Heart right ventricle (tissue), 16 donors: ENCODE measurements at regions of chr17 and their contacts with region 1.

Region 1: GRCh38 chr17:21457051-21458026 is 81.2 kb downstream of the KCNJ12 start:
- DNase-seq: peak; percentile 86 to 94
- ATAC-seq: peak; percentile 90 to 94 (median 92)
- H3K4me3 ChIP-seq: no peak overlapping the region
- H3K27ac ChIP-seq: no peak overlapping the region
- H3K4me1 ChIP-seq: peaks cover 0 to 11% (median 5%) of the 10 kb centered on the region in 9 donors
- H3K27me3 ChIP-seq: peaks cover 0 to 6% (median 0%) of the 10 kb centered on the region in 7 donors
- CTCF ChIP-seq: peak; percentile 89 to 99 (median 97)

Region 2: DNA sequence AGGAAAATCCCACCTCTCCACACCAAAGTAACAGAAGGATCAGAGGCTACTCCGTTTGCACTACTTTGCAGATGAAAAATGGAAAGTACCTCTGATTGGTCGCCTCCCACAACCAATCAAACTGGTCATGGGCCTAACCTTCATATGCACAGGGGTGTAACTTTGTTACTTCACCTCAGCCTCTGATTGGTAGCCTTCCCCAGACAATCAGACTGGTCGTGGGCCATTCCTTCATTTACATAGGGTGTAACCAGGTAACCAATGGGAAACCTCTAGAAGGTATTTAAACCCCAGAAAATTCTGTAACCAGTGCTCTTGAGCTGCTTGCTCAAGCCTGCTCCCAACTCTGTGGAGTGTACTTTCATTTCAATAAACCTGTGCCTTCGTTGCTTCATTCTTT is 375.4 kb before region 1 on chr17:
- intact Hi-C with region 1: no loop called
- DNase-seq: no peak
- ATAC-seq: no peak
- H3K4me3 ChIP-seq: no peak overlapping the region
- H3K27ac ChIP-seq: no peak overlapping the region
- H3K4me1 ChIP-seq: peaks cover 0 to 7% (median 0%) of the 10 kb centered on the region in 9 donors
- H3K27me3 ChIP-seq: peaks cover 0 to 4% (median 0%) of the 10 kb centered on the region in 7 donors
- CTCF ChIP-seq: no peak

Region 3: GRCh38 chr17:21100636-21101035 is 356.7 kb before region 1 on chr17:
- intact Hi-C with region 1: no loop called
- DNase-seq: no peak
- ATAC-seq: no peak
- H3K4me3 ChIP-seq: no peak overlapping the region
- H3K27ac ChIP-seq: no peak overlapping the region
- H3K4me1 ChIP-seq: peaks cover 0 to 14% (median 13%) of the 10 kb centered on the region in 9 donors
- H3K27me3 ChIP-seq: no peaks in the 10 kb centered on the region
- CTCF ChIP-seq: no peak

Region 4: GRCh38 chr17:21119247-21119918 is 338.0 kb before region 1 on chr17:
- intact Hi-C with region 1: loop called in 5 of 10 experiments (anchors 5 to 10 kb)
- DNase-seq: peak; percentile 45 to 76
- ATAC-seq: peak; percentile 67 to 93 (median 78)
- H3K4me3 ChIP-seq: peak overlapping the region in 3 of 10 donors; percentile 8 to 23 (median 17)
- H3K27ac ChIP-seq: peak overlapping the region in 5 of 10 donors; percentile 10 to 55 (median 21)
- H3K4me1 ChIP-seq: peaks cover 0 to 22% (median 7%) of the 10 kb centered on the region in 9 donors
- H3K27me3 ChIP-seq: peaks cover 0 to 4% (median 0%) of the 10 kb centered on the region in 7 donors
- CTCF ChIP-seq: peak; percentile 63 to 87 (median 83)

Region 5: DNA sequence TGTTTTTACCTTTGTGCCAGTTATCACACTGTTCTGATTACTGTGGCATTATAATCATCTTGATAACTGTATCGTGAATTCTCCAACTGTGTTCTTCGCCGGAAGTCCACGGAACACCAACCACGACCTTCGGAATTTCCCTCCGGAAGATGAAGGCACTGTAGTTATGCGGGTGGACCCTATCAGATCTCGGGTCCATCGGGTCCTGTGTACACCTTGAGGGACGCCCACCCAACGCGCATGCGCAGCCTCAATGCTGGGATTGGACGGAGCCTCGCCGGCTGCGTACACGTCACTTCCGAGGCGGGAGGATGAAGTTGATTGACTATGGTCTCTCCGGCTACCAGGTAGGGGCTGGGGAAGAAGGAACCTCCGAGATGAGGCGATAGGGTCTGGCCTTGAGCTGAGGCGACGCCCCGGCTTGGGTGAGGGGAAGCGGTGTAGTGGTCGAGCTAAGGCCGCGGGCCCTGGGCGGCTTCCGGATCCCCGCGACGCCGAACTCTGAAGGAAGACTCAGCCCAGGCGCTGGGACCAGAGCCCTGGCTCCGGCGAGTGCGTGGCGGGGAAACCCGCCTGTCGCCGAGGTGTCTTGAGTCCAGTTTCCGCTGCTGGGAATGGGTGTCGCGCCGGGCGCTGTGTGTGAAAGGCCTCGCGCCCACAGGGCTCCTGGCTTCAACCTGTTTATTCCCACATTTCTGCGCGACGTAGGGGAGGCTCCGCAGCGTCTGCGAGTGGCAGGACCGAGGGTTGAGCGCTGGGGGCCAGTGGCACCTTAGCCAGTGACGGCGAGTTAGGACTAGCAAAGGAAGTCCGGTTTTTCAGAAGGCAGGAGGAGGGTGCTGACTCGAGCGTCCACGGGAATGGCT is 330.5 kb before region 1 on chr17 and contains the start of gene DHRS7B:
- intact Hi-C with region 1: loop called in 4 of 10 experiments (anchors 5 to 10 kb)
- DNase-seq: peak; percentile 96 to 97
- ATAC-seq: peak; percentile 96 to 98 (median 98)
- H3K4me3 ChIP-seq: peak within 1 kb of the TSS; percentile 61 to 96 (median 91)
- H3K27ac ChIP-seq: peak within 1 kb of the TSS; percentile 82 to 96 (median 94)
- H3K4me1 ChIP-seq: peaks cover 4 to 63% (median 39%) of the 10 kb centered on the region in 9 donors
- H3K27me3 ChIP-seq: no peaks in the 10 kb centered on the region
- CTCF ChIP-seq: peak in 1 of 9 donors; percentile 13
- total RNA-seq, gene DHRS7B: 17.1 to 48.0 (median 26.0) TPM

Region 6: DNA sequence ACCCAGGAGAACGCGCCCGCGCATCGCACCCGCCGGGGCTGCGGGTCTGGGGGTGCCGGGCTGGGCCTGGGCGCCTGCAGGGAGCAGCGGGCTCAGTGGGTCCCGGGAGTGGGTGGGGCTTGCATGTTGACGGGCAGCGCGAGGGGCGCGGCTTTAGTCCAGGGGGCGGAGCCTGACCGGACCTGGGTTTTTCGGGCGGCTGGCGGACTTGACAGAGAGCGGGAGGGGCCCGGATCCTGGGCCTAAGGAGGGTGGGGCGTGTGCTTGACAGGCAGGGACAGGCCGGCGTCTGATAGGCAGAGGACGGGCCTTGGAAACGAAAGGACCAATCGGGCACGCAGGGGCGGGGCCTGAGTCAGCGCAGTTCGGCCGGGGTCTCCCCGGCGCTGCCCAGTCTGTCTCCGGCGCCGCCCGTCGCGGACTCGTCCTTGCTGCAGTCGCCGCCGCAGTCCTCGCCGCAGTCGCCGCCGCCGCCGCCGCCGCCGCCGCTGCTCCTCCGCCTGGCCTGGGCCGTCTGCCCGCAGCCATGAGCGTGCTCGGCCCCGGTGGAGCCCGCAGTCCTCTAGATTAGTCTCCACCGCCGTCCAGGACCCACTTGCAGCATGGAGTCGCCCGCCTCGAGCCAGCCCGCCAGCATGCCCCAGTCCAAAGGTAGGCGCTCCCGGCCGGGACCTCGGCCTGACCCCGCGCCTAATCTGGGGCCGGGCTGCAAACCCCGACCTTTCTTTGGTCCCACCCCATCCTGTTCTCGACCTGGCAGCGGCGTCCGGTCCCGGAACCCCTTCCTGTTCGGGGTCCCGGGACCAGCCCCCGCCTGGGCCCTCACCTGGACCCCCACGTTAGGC is 172.8 kb before region 1 on chr17 and contains the start of gene MAP2K3:
- intact Hi-C with region 1: loop called in 7 of 10 experiments (anchors 5 to 10 kb)
- DNase-seq: peak; percentile 99
- ATAC-seq: peak; percentile 79 to 91 (median 86)
- H3K4me3 ChIP-seq: peak within 1 kb of the TSS; percentile 67 to 99 (median 97)
- H3K27ac ChIP-seq: peak within 1 kb of the TSS; percentile 83 to 99 (median 96)
- H3K4me1 ChIP-seq: peaks cover 35 to 71% (median 49%) of the 10 kb centered on the region in 9 donors
- H3K27me3 ChIP-seq: no peaks in the 10 kb centered on the region
- CTCF ChIP-seq: peak in 1 of 9 donors; percentile 0
- total RNA-seq, gene MAP2K3: 28.9 to 71.6 (median 60.4) TPM

Region 7: DNA sequence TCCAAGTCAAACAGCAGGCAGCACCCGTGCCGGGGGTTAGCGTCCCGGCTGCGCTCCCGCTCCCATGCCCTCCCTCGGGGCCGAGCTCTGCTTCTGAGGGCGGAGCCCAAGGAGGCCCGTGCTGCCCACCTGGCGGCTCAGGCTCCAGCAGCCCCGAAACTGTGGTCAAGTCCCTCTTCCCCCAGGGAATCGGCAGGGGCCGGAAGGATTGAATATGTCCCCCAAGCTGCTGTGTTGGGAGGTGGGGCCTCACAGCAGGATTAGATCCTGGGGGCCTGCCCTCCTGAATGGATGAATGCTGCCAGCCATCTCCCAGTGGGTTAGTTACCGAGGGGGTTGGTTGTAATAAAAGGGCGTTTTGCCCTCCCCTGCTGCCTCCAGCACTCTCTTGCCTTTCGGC is 138.9 kb before region 1 on chr17:
- intact Hi-C with region 1: loop called in 5 of 10 experiments (anchors 5 to 10 kb)
- DNase-seq: no peak
- ATAC-seq: no peak
- H3K4me3 ChIP-seq: no peak overlapping the region
- H3K27ac ChIP-seq: no peak overlapping the region
- H3K4me1 ChIP-seq: peaks cover 0 to 8% (median 6%) of the 10 kb centered on the region in 9 donors
- H3K27me3 ChIP-seq: peaks cover 0 to 1% (median 0%) of the 10 kb centered on the region in 7 donors
- CTCF ChIP-seq: no peak

Region 8: GRCh38 chr17:21419299-21420239 is 37.8 kb before region 1 on chr17:
- intact Hi-C with region 1: no loop called
- DNase-seq: no peak
- ATAC-seq: peak in 5 of 8 donors; percentile 11 to 31 (median 22)
- H3K4me3 ChIP-seq: no peak overlapping the region
- H3K27ac ChIP-seq: no peak overlapping the region
- H3K4me1 ChIP-seq: peaks cover 0 to 27% (median 4%) of the 10 kb centered on the region in 9 donors
- H3K27me3 ChIP-seq: no peaks in the 10 kb centered on the region
- CTCF ChIP-seq: no peak

Region 9: DNA sequence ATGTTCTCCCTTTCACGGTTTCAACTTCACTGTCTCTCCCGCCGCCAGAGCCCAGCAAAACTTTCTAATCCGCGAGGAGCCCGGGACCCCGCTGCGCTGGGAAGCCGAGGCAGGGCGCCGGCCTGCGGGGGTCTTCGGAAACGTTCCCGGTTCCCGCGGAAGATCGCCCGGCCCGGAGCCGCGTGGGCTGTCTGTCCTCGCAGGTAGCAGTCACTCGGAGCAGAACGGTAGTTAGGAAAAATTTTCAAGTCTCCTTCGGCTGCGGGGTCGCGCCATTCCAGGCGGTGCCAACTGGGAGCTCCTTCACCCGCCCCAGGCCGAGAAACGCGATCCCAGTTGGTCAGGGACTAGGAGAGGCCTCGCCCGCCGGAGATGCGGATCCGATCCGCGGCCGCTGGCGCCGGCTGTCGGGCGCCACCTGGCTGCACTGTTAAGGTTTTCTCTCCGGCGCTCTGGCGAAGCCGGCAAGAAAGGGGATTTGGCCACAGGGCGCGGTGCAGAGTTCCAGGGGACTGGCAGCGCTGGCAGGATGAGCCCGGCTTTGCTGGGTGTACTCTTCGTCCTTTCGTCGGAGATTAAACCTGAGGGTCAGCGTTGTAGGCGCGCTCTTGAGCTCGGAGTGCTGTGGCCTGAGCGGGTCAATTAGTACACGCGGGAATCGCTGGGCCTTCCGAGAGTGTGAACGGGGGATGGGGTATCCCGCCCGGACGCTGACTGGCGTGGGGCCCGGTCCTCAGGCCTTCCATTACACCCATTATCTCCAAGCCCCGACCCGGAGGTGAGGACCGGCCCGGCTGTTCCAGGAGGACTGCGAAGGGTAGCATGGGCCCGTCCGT is 54.2 kb after region 1 on chr17:
- intact Hi-C with region 1: loop called (anchors 1 to 5 kb)
- DNase-seq: peak; percentile 82 to 86
- ATAC-seq: peak; percentile 93 to 98 (median 96)
- H3K4me3 ChIP-seq: peak overlapping the region; percentile 38 to 69 (median 62)
- H3K27ac ChIP-seq: peak overlapping the region in 9 of 10 donors; percentile 21 to 81 (median 60)
- H3K4me1 ChIP-seq: peaks cover 0 to 20% (median 4%) of the 10 kb centered on the region in 9 donors
- H3K27me3 ChIP-seq: peaks cover 0 to 21% (median 0%) of the 10 kb centered on the region in 7 donors
- CTCF ChIP-seq: peak; percentile 71 to 94 (median 85)